ENCODE measurements at regions of chr19 and their contacts with region 1.

Region 1: DNA sequence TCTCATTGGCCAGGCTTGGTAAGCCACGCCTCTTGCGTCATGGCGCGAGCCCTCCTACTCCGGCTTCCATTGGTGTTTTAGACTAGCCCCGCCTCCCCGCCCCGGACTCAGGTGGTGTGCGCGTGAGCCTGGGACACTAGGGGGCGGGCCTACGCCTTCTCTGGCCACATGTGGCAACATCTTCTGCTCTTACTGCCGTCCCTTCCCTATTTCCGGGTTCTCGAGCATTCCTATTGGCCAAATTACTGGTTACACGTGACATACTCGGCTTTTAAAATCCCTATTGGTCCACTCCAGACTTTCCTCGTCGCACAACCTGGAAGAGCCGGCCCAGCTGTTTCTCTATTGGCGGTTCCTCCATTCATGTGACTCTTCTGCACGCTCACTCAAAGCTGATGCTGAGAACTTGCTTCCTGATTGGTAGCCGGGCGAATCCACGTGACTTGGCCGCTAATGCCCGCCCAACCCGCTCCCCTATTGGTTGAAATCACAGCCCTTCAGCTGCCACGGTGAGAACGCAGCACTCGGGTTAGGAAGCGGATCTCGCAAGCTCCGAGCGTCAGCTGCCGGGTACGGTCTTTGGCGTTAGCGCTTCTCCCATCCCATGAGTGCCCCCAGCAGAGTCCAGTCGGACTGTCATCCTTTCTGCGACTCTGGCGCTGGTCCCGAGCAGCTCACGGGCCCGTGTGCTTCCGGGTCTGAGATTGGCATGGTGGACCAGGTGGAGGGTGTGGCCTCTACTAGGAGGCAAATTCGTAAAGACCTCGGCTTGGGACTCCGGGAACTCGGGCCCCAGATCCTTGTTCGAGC is at the start of gene BLOC1S3:
- DNase-seq: peak; percentile 100
- ATAC-seq: peak; percentile 85
- H3K4me3 ChIP-seq: peak within 1 kb of the TSS; percentile 74 to 81
- H3K27ac ChIP-seq: peak within 1 kb of the TSS; percentile 93
- H3K4me1 ChIP-seq: peaks cover 14 to 25% of the 10 kb centered on the region in 2 experiments; a peak in 3 of 4 replicates
- H3K27me3 ChIP-seq: no peaks in the 10 kb centered on the region
- CTCF ChIP-seq: peak in 1 of 3 experiments; percentile 15; a peak in 1 of 6 replicates
- POLR2A ChIP-seq: peak; percentile 14
- RAD21 ChIP-seq: no peak
- total RNA-seq, gene BLOC1S3: 12.2 TPM

Region 2: DNA sequence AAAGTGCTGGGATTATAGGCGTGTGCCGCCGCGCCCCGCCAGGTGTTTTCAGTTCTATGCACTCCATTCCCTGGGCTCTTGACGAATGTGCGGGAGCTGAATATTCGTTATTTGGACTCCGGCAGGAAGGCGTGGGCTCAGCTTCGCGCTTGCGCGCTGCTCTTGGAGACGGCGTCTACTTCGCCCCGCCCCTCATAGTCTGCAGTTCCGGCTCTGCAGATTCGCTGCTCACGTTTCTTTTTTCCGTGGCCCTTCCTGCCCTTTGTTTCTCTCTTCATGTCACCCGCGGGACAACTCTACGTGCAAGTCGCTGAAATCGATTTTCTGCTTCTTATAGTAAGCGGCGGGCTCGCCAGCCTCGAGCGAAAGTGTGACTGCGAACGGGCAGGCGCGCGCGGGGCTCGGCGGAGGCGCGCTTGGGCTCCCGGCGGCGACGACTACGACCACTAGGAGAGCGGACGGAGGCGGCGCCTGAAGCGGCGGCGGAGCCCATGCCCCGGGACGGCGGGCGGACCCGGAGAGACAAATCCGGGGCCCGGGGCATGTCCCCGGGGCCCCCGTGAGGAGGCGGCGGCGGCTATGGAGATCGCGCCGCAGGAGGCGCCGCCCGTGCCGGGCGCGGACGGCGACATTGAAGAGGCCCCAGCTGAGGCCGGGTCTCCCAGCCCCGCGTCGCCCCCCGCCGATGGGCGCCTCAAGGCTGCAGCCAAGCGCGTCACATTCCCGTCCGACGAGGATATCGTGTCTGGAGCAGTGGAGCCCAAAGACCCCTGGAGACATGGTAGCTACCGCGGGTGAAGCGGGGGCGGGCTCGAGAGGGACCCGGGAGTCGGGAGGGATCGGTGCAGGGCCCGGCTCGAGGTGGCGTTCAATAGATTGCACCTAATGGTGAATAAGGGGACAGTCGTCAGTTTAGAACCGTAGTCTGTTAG is 85.5 kb before region 1 on chr19 and contains the start of gene PPP1R37:
- CTCF ChIA-PET with region 1: interaction called, 4 read pairs
- POLR2A ChIA-PET with region 1: interaction called, 4 read pairs
- RAD21 ChIA-PET with region 1: interaction called in 1 of 2 experiments, 3 read pairs
- intact Hi-C with region 1: loop called (anchors 10 kb)
- DNase-seq: peak; percentile 98
- ATAC-seq: peak; percentile 71
- H3K4me3 ChIP-seq: peak within 1 kb of the TSS; percentile 94 to 96
- H3K27ac ChIP-seq: peak within 1 kb of the TSS; percentile 84
- H3K4me1 ChIP-seq: peaks cover 13 to 57% of the 10 kb centered on the region in 2 experiments; a peak in 3 of 4 replicates
- H3K27me3 ChIP-seq: no peaks in the 10 kb centered on the region
- CTCF ChIP-seq: peak in 2 of 3 experiments; percentile 10 to 32; a peak in 1 of 6 replicates
- POLR2A ChIP-seq: peak; percentile 26
- RAD21 ChIP-seq: no peak
- total RNA-seq, gene PPP1R37: 32.7 TPM

Region 3: DNA sequence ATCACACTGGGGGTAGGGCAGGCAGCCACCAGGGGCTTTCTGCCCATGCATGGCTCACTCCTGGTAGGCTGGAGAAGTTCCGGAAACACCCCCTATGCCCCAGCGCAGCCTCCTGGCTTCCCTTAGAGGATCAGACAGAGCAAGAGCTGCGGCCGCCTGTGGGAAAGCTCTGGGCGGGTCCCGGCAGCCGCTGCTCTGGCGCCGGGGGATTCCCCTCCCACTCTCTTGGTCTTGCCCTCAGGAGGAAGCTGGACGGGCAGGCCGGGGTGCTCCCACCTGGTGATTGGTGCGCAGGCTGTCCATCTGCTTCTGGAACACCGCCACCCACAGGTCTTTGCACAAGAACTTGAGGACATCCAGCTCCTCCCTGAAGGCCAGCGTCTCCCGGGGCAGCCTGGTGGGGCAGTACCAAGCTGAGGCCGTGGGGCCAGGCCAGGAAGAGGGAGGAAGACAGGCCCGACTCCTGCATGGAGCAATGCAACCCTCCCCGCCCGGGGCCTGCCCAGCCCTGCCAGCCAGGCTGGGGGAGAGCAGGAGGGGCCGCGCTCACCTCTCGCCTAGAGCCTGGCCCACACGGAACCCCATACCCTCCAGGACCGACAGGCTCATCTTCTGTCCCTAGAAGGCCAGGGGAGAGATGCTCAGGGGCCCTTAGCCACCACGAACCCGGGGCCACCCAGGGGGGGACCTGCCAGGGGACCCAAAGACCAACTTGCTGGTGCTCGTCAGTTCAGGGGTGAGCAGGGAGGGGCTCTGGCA is 13.7 kb before region 1 on chr19:
- CTCF ChIA-PET with region 1: interaction called, 12 read pairs
- POLR2A ChIA-PET with region 1: interaction called, 7 read pairs
- RAD21 ChIA-PET with region 1: no interaction called
- intact Hi-C with region 1: loop called (anchors 1 kb)
- DNase-seq: peak; percentile 83
- ATAC-seq: peak; percentile 91
- H3K4me3 ChIP-seq: peak overlapping the region; percentile 20 to 33; a peak in 3 of 4 replicates
- H3K27ac ChIP-seq: no peak overlapping the region; the same call in 1 of the 2 replicates
- H3K4me1 ChIP-seq: peaks cover 22 to 42% of the 10 kb centered on the region in 2 experiments
- H3K27me3 ChIP-seq: no peaks in the 10 kb centered on the region
- CTCF ChIP-seq: peak in 2 of 3 experiments; percentile 15 to 20; a peak in 2 of 6 replicates
- POLR2A ChIP-seq: no peak
- RAD21 ChIP-seq: no peak

Measured in HCT116 (cell line).